ENCODE measurements at regions of chr11 and their contacts with region 1.

Region 1: DNA sequence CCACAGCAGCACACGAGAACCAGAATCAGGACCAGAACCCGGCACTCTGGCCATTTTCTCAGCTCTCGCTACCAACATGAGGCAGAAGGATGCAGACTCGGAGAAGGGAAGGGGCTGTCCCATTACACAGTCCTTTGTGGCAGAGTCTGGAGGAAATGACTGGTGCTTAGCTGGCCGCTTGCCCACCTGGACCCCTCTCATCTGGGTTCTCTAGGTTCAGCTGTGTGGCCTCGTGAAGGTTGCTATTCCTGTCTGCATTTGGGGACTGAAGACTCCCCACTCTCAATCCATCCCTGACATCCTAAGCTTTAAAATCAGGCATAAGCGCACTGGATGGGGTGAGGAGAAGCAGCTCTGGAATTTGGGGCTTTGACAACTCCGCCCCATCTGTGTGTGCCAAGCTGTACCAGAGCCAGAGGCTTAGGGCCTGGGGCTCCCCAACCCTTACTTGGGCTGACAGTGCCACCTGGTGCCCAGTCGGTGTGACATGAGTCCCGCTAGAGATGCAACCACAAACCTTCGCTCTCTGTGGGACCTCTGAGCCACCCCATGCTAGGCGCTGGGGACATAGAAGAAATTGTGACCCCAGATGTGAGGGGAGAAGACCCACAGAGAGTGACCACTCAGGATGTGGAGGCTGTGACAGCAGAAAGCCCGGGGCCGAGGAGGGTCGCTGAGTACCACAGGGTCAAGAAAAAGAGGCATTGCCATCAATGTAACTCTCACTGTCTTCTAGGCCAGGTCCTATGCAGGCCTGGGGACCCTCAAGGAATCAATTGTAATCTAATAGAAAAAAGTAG is 35.9 kb upstream of the FCHSD2 start:
- DNase-seq: peak; percentile 60 to 84 (median 65)
- H3K4me3 ChIP-seq: no peak overlapping the region
- H3K4me3 Mint-ChIP-seq: peak overlapping the region in 1 of 7 donors; percentile 61
- H3K27ac ChIP-seq: no peak overlapping the region
- H3K27ac Mint-ChIP-seq: peak overlapping the region in 1 of 8 donors; percentile 66
- H3K4me1 ChIP-seq: no peaks in the 10 kb centered on the region
- H3K4me1 Mint-ChIP-seq: peaks cover 0 to 6% (median 5%) of the 10 kb centered on the region in 3 donors
- H3K27me3 ChIP-seq: no peaks in the 10 kb centered on the region
- H3K27me3 Mint-ChIP-seq: peaks cover 1% of the 10 kb centered on the region in 2 donors

Region 2: DNA sequence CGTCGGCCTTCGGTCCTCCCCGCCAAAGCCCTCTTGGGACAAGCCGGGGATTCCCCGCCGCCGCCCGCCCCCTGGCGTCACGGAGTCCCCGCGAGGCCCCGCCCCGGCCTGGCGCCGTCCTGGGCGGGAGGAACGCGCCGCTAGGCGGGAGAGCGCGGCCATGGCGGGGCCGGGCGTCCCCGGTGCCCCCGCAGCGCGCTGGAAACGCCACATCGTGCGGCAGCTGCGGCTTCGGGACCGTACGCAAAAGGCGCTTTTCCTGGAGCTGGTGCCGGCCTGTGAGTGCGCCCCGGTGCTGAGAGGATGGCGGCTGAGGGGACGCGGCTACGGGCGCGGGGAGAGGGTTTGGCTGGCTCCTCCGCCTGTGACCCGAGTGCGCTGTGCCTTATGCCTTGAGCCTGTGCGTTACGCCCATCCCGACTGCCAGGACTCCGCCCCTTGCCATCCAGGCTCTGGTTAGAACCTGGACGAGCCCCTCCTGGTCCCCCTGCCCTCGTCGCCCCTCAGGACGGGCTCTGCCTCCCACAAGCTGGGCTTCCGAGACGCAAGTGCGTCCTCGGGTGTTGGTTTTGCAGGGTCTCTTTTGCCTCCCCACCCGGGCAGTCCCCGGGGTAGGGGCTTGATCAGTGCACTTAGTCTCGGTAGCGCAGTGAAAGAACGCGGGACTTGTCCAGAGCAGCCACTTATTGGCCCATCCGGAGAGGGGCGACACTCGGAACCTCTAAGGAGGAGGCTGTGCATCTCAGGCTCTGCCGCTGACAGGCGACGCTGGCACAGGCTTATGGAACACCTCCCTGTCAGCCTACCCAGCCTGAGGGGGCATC is 363.5 kb before region 1 on chr11 and contains the start of gene ATG16L2:
- CTCF ChIA-PET with region 1: interaction called, 11 read pairs
- POLR2A ChIA-PET with region 1: no interaction called
- DNase-seq: peak; percentile 85 to 93 (median 90)
- H3K4me3 ChIP-seq: peak within 1 kb of the TSS; percentile 95
- H3K4me3 Mint-ChIP-seq: peak within 1 kb of the TSS; percentile 96 to 100 (median 99)
- H3K27ac ChIP-seq: peak within 1 kb of the TSS; percentile 99
- H3K27ac Mint-ChIP-seq: peak within 1 kb of the TSS; percentile 99 to 100 (median 100)
- H3K4me1 ChIP-seq: peaks cover 18% of the 10 kb centered on the region
- H3K4me1 Mint-ChIP-seq: peaks cover 44 to 65% (median 58%) of the 10 kb centered on the region in 3 donors
- H3K27me3 ChIP-seq: no peaks in the 10 kb centered on the region
- H3K27me3 Mint-ChIP-seq: peaks cover 0 to 5% of the 10 kb centered on the region in 2 donors
- total RNA-seq, gene ATG16L2: 50.3 to 53.2 TPM

Region 3: DNA sequence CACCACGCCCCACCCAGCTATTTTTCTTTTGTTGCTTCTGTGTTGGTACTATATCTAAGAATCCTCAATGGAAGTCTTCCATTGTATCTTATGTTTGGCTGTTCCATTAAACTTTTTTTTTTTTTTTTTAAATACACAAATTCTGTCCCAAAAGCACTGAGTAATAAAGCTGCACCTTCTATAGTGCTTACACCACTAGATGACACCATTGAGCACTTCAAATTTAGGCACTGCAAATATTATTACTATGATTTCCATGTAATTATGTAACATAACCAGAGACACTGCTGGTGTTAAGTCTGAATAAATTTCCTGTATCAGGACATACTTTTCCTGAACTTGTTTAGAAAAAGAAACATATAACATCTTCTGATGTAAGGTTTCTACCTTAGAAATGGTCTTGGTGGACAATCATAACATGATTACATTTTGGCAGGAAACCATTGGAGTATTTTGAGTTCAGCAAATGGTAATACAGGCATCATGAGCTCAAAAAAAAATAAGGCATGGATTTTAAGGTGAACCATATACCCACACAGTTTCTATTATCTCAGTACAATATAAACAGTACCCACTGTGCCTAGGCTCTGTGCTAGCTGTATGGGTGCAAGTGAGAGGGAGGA is 253.3 kb before region 1 on chr11:
- CTCF ChIA-PET with region 1: interaction called, 38 read pairs
- POLR2A ChIA-PET with region 1: no interaction called
- DNase-seq: peak in 1 of 5 donors; percentile 10
- H3K4me3 ChIP-seq: no peak overlapping the region
- H3K4me3 Mint-ChIP-seq: no peak overlapping the region
- H3K27ac ChIP-seq: no peak overlapping the region
- H3K27ac Mint-ChIP-seq: peak overlapping the region in 3 of 8 donors; percentile 48 to 61 (median 59)
- H3K4me1 ChIP-seq: no peaks in the 10 kb centered on the region
- H3K4me1 Mint-ChIP-seq: peaks cover 4 to 9% (median 6%) of the 10 kb centered on the region in 3 donors
- H3K27me3 ChIP-seq: no peaks in the 10 kb centered on the region
- H3K27me3 Mint-ChIP-seq: no peaks in the 10 kb centered on the region

Region 4: DNA sequence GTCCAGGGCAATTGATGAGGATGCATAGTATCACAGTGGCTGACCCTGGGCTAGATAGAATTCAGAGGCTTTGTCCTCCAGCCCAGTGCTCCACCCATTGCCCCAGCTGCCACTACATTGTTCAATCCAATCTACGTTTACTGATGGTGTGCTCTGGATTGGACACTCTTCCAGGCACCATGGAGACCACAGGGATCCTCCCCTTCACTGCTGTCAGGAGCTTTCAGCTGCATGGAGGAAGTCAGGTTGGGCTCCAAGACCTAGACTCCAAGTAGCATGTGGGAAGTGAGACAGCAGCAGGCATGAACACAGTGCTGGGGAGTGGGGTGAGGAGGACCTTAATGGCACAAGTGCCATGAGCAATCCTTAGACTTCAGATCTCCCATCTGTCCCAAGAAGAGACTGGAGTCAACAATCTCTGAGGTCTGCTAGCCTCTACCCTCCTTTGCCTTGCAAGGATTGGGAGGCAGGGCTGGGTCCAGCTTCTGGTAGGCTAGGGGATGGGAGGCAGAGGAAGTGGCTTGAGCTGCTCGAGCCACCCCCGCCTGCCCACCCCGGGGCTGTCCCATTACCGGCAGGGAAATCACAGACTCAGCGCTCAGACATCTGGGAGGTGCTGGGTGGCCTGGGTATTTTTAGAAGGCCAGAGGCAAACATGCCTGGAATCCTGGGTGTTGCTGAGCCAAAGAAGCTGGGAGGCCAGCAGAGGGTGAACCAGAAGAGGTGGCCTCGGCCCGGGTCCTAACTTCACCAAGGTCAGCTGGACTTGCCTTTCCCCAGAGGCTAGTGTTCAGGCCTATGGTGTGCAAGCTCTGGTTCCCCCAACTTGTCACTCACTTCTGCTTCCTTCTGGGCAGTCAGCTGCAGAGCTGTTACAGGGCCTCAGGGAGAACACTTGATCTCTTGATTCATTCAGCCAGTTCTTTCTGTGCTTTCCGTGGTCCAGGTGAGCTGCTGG is 20.6 kb before region 1 on chr11:
- CTCF ChIA-PET with region 1: interaction called, 13 read pairs
- POLR2A ChIA-PET with region 1: interaction called, 5 read pairs
- DNase-seq: no peak
- H3K4me3 ChIP-seq: no peak overlapping the region
- H3K4me3 Mint-ChIP-seq: no peak overlapping the region
- H3K27ac ChIP-seq: no peak overlapping the region
- H3K27ac Mint-ChIP-seq: peak overlapping the region in 4 of 8 donors; percentile 17 to 76 (median 64)
- H3K4me1 ChIP-seq: peaks cover 45% of the 10 kb centered on the region
- H3K4me1 Mint-ChIP-seq: peaks cover 37 to 46% (median 43%) of the 10 kb centered on the region in 3 donors
- H3K27me3 ChIP-seq: no peaks in the 10 kb centered on the region
- H3K27me3 Mint-ChIP-seq: peaks cover 0 to 3% of the 10 kb centered on the region in 2 donors

Measured in CD8-positive, alpha-beta memory T cell (primary cell).